Naive thymus-derived CD4-positive, alpha-beta T cell (primary cell): ENCODE measurements at regions of chr12 and their contacts with region 1.

Region 1: DNA sequence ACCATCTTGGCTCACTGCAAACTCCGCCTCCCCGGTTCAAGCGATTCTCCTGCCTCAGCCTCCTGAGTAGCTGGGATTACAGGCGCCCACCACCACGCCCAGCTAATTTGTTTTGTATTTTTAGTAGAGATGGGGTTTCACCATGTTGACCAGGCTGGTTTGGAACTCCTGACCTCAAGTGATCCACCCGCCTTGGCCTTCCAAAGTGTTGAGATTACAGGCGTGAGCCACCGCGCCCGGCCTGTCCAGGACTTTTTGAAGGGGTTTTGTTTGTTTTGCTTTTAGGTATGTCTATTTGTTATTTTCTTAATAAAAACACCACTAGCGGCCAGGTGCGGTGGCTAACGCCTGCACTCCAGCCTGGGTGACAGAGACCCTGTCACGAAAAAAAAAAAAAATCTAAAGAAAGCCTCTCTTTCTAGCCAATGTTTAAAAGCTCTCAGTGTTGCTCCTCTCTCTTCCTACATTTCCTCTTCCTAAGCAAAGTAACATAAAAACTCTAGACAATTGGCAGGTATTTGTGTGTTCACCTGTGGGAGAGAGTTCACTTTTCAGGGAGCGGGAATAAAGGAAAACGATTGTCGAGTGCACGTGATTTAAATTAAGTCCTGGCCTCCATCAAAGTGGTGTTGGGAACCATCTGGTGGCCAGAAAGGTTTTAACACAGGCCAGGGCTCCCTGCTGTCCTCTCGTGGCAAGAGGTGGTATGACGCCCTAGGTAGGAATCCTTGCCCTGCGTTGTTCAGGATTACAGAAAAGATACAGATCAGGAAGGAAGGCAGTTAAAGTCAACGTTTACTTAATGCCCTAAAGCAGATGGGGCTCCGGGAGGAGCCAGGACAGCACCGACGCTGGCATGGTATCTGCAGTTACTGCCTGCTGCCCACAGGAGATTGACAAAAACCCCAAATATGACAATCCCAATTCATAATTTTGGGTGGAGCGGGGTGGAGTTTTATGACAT is 36.2 kb upstream of the ATP23 start:
- DNase-seq: peak; percentile 64 to 86 (median 76)
- ATAC-seq: peak; percentile 100
- H3K4me3 ChIP-seq: no peak overlapping the region
- H3K4me3 Mint-ChIP-seq: peak overlapping the region; percentile 31 to 73 (median 64)
- H3K27ac ChIP-seq: no peak overlapping the region
- H3K27ac Mint-ChIP-seq: peak overlapping the region in 5 of 9 donors; percentile 2 to 68 (median 51)
- H3K4me1 ChIP-seq: peaks cover 0 to under 1% of the 10 kb centered on the region in 2 donors
- H3K4me1 Mint-ChIP-seq: peaks cover 5 to 11% (median 6%) of the 10 kb centered on the region in 7 donors
- H3K27me3 ChIP-seq: no peaks in the 10 kb centered on the region
- H3K27me3 Mint-ChIP-seq: peaks cover 4 to 36% (median 17%) of the 10 kb centered on the region in 5 donors

Region 2: GRCh38 chr12:57632694-57633477 is 272.2 kb before region 1 on chr12 and contains the start of gene B4GALNT1:
- CTCF ChIA-PET with region 1: no interaction called
- POLR2A ChIA-PET with region 1: no interaction called
- intact Hi-C with region 1: loop called in 1 of 2 experiments (anchors 1 kb)
- DNase-seq: peak; percentile 33 to 74 (median 63)
- ATAC-seq: peak; percentile 96
- H3K4me3 ChIP-seq: peak within 1 kb of the TSS; percentile 57
- H3K4me3 Mint-ChIP-seq: peak within 1 kb of the TSS; percentile 51 to 83 (median 70)
- H3K27ac ChIP-seq: no peak within 1 kb of the TSS
- H3K27ac Mint-ChIP-seq: peak within 1 kb of the TSS in 3 of 9 donors; percentile 13 to 66 (median 46)
- H3K4me1 ChIP-seq: peaks cover 8% of the 10 kb centered on the region in 2 donors
- H3K4me1 Mint-ChIP-seq: peaks cover 0 to 14% (median 10%) of the 10 kb centered on the region in 7 donors
- H3K27me3 ChIP-seq: peaks cover 0 to 18% of the 10 kb centered on the region in 2 donors
- H3K27me3 Mint-ChIP-seq: peaks cover 34 to 69% (median 49%) of the 10 kb centered on the region in 5 donors
- total RNA-seq, gene B4GALNT1: 1.4 TPM in 1 of 5 experiments, not detected in the others

Region 3: GRCh38 chr12:57661376-57661775 is 243.8 kb before region 1 on chr12:
- CTCF ChIA-PET with region 1: no interaction called
- POLR2A ChIA-PET with region 1: no interaction called
- intact Hi-C with region 1: no loop called
- DNase-seq: no peak
- ATAC-seq: no peak
- H3K4me3 ChIP-seq: no peak overlapping the region
- H3K4me3 Mint-ChIP-seq: no peak overlapping the region
- H3K27ac ChIP-seq: no peak overlapping the region
- H3K27ac Mint-ChIP-seq: no peak overlapping the region
- H3K4me1 ChIP-seq: no peaks in the 10 kb centered on the region
- H3K4me1 Mint-ChIP-seq: no peaks in the 10 kb centered on the region
- H3K27me3 ChIP-seq: no peaks in the 10 kb centered on the region
- H3K27me3 Mint-ChIP-seq: peaks cover 0 to 7% (median 2%) of the 10 kb centered on the region in 5 donors

Region 4: DNA sequence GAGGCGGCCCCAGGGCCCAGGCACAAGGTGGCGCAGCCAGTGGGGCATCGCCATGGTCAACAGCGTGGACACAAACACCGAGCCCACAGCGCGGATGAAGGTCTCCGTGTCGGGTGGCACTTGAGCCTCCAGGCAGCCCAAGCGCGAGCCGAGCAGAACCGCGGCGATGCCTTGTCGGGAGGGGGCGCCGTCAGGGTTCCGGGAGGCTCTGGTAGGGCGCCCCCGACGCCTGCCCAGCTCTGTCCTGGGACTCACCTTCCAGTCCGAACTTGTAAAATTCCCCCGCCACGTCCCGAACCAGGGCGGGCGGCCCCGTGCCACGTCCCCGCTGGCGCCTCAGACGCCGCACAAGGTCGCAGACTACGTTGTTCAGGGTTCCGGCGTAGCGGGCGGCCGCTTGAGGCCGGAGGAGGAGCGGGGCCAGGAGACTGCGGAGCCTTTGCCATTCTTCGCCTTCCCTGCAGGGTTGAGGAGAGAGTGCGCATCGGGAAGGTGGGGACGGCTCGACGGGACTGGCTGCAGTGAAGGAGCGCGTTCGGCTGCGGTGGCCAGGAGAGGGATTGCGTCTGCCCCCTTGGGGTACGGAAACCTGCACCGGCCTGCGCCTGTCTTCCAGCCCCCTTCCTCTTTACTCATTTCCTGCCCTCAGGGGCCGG is 140.0 kb before region 1 on chr12:
- CTCF ChIA-PET with region 1: interaction called, 11 read pairs
- POLR2A ChIA-PET with region 1: no interaction called
- intact Hi-C with region 1: loop called in 1 of 2 experiments (anchors 1 kb)
- DNase-seq: peak in 5 of 9 donors; percentile 42 to 62 (median 45)
- ATAC-seq: peak; percentile 79
- H3K4me3 ChIP-seq: peak overlapping the region; percentile 70
- H3K4me3 Mint-ChIP-seq: peak overlapping the region; percentile 72 to 93 (median 88)
- H3K27ac ChIP-seq: peak overlapping the region; percentile 39
- H3K27ac Mint-ChIP-seq: peak overlapping the region in 1 of 9 donors; percentile 71
- H3K4me1 ChIP-seq: peaks cover 15 to 26% of the 10 kb centered on the region in 2 donors
- H3K4me1 Mint-ChIP-seq: peaks cover 16 to 41% (median 32%) of the 10 kb centered on the region in 7 donors
- H3K27me3 ChIP-seq: peaks cover 0 to 12% of the 10 kb centered on the region in 2 donors
- H3K27me3 Mint-ChIP-seq: peaks cover 9 to 27% (median 17%) of the 10 kb centered on the region in 5 donors

Region 5: GRCh38 chr12:57803319-57803893 is 101.7 kb before region 1 on chr12:
- CTCF ChIA-PET with region 1: interaction called, 53 read pairs
- POLR2A ChIA-PET with region 1: interaction called, 3 read pairs
- intact Hi-C with region 1: loop called (anchors 1 kb)
- DNase-seq: peak in 6 of 9 donors; percentile 23 to 46 (median 35)
- ATAC-seq: peak; percentile 60
- H3K4me3 ChIP-seq: no peak overlapping the region
- H3K4me3 Mint-ChIP-seq: no peak overlapping the region
- H3K27ac ChIP-seq: no peak overlapping the region
- H3K27ac Mint-ChIP-seq: peak overlapping the region in 1 of 9 donors; percentile 21
- H3K4me1 ChIP-seq: no peaks in the 10 kb centered on the region
- H3K4me1 Mint-ChIP-seq: peaks cover 0 to 7% (median 0%) of the 10 kb centered on the region in 7 donors
- H3K27me3 ChIP-seq: no peaks in the 10 kb centered on the region
- H3K27me3 Mint-ChIP-seq: no peaks in the 10 kb centered on the region

Region 6: DNA sequence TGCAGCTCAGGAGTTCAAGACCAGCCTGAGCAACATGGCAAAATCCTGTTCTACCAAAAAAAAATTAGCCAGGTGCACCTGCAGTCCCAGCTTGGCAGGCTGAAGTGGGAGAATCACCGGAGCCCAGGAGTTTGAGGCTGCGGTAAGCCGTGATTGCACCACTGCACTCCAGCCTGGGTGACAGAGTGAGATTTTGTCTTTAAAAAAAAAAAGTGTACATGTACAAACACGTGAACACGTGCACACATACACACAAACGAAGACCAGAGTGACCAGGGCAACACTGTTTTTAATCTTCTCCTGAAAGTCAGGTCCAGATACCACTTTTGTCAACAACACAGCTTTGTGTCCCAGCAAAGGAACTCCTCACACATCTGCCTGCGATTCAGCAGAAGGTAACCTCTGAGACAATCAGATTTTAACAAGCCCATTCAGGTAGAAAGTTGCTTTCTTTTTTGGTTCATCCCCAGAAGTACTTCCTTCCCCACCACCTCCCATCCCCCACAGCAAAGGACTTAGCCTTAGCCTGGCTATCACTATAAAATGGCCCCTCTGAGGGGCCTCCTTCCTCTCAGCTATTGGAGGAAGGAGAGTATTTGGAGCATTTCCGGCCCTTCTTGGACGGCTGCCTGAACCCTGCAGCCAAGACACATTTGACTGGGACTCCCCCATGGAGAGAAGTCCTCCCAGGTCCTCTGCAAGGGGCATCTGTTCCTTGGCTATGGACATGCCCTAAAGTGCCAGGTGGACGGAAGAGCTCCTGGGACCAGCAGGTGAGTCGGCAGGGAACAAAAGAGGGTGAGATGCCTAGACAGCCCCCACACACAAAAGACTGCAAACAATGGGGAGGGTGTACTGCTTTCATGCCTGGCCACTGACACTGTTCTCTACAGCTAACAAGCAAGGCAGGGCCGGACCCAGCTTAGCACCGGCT is 68.4 kb before region 1 on chr12:
- CTCF ChIA-PET with region 1: interaction called, 34 read pairs
- POLR2A ChIA-PET with region 1: interaction called, 10 read pairs
- intact Hi-C with region 1: loop called (anchors 1 kb)
- DNase-seq: peak in 6 of 9 donors; percentile 25 to 51 (median 39)
- ATAC-seq: peak; percentile 29
- H3K4me3 ChIP-seq: peak overlapping the region; percentile 53
- H3K4me3 Mint-ChIP-seq: peak overlapping the region; percentile 58 to 97 (median 76)
- H3K27ac ChIP-seq: peak overlapping the region; percentile 89
- H3K27ac Mint-ChIP-seq: peak overlapping the region; percentile 87 to 97 (median 94)
- H3K4me1 ChIP-seq: peaks cover 91 to 95% of the 10 kb centered on the region in 2 donors
- H3K4me1 Mint-ChIP-seq: peaks cover 73 to 99% (median 91%) of the 10 kb centered on the region in 7 donors
- H3K27me3 ChIP-seq: no peaks in the 10 kb centered on the region
- H3K27me3 Mint-ChIP-seq: no peaks in the 10 kb centered on the region

Region 7: GRCh38 chr12:57935839-57936512 is 30.8 kb after region 1 on chr12:
- CTCF ChIA-PET with region 1: no interaction called
- POLR2A ChIA-PET with region 1: no interaction called
- intact Hi-C with region 1: loop called in 1 of 2 experiments (anchors 1 kb)
- DNase-seq: peak; percentile 65 to 95 (median 92)
- ATAC-seq: peak; percentile 96
- H3K4me3 ChIP-seq: peak overlapping the region; percentile 71
- H3K4me3 Mint-ChIP-seq: peak overlapping the region; percentile 84 to 99 (median 98)
- H3K27ac ChIP-seq: peak overlapping the region; percentile 98
- H3K27ac Mint-ChIP-seq: peak overlapping the region; percentile 98 to 100 (median 99)
- H3K4me1 ChIP-seq: peaks cover 21 to 23% of the 10 kb centered on the region in 2 donors
- H3K4me1 Mint-ChIP-seq: peaks cover 21 to 47% (median 34%) of the 10 kb centered on the region in 7 donors
- H3K27me3 ChIP-seq: no peaks in the 10 kb centered on the region
- H3K27me3 Mint-ChIP-seq: peaks cover 0 to 2% (median 0%) of the 10 kb centered on the region in 5 donors